Naive thymus-derived CD8-positive, alpha-beta T cell (primary cell): ENCODE measurements at regions of chr5 and their contacts with region 1.

Region 1: GRCh38 chr5:1315709-1316587 is 21.1 kb upstream of the TERT start:
- DNase-seq: peak; percentile 38 to 84 (median 68)
- ATAC-seq: peak; percentile 65 to 76
- H3K4me3 Mint-ChIP-seq: peak overlapping the region; percentile 75 to 93 (median 84)
- H3K27ac Mint-ChIP-seq: peak overlapping the region; percentile 87 to 98 (median 92)
- H3K4me1 Mint-ChIP-seq: peaks cover 36 to 68% (median 63%) of the 10 kb centered on the region in 4 donors
- H3K27me3 Mint-ChIP-seq: no peaks in the 10 kb centered on the region

Region 2: GRCh38 chr5:1294835-1295649 is 20.9 kb before region 1 on chr5 and contains the start of gene TERT:
- POLR2A ChIA-PET with region 1: interaction called, 38 read pairs
- DNase-seq: peak; percentile 39 to 86 (median 60)
- ATAC-seq: peak; percentile 77 to 88
- H3K4me3 Mint-ChIP-seq: peak within 1 kb of the TSS; percentile 30 to 66 (median 48)
- H3K27ac Mint-ChIP-seq: no peak within 1 kb of the TSS
- H3K4me1 Mint-ChIP-seq: peaks cover 0 to 14% (median 8%) of the 10 kb centered on the region in 4 donors
- H3K27me3 Mint-ChIP-seq: peaks cover 0 to 8% (median 0%) of the 10 kb centered on the region in 5 donors
- polyA plus RNA-seq, gene TERT: 0.12 TPM in 1 of 3 donors, not detected in the others

Region 3: GRCh38 chr5:1344975-1345838 is 29.3 kb after region 1 on chr5 and contains the start of gene CLPTM1L:
- POLR2A ChIA-PET with region 1: interaction called, 17 read pairs
- DNase-seq: peak; percentile 82 to 92 (median 89)
- ATAC-seq: peak; percentile 95
- H3K4me3 Mint-ChIP-seq: peak within 1 kb of the TSS; percentile 78 to 94 (median 91)
- H3K27ac Mint-ChIP-seq: peak within 1 kb of the TSS; percentile 86 to 93 (median 89)
- H3K4me1 Mint-ChIP-seq: peaks cover 15 to 40% (median 35%) of the 10 kb centered on the region in 4 donors
- H3K27me3 Mint-ChIP-seq: no peaks in the 10 kb centered on the region
- polyA plus RNA-seq, gene CLPTM1L: 24.9 to 66.4 (median 49.7) TPM